ENCODE measurements at regions of chr12 and their contacts with region 1.

Region 1: DNA sequence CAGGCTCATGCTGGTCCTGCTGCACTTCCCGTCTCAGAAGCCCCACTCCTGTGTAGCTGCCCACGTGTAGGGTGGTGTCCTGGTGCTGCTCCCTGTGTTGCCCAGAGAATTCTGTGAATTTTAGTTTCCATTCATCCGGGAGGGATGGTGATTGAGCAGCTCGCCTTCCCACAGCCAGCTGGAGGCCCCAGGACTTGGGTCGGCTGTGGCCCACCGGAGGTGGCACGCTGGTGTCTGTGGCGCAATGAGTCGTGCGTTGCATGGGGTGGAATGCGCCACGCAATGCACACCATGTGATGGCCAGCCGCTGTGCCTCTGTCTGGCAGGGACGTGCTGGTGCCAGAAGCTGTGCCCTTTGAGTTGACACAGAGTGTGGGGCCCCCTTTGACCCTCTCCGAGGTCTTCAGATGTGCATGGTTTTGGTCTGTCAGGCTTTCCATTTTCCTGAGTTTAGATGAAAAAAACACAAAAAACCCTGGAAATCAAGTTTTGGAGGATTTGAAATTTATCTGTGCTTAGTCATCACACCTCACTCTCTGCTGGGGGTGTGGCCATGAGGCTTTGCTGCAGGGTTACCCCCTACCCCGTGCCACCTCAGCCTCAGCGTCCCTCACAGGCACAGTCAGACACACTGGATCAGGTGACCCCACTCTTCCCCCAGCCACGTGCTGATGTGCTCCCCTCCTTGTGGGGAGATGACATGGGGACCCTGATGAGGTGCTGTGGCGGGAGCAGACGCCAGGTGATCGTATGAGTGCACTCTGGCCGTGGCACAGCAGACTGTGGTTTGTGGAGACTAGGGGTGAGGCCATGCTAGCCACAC is 64.6 kb downstream of the EP400 start:
- DNase-seq: peak; percentile 45

Region 2: DNA sequence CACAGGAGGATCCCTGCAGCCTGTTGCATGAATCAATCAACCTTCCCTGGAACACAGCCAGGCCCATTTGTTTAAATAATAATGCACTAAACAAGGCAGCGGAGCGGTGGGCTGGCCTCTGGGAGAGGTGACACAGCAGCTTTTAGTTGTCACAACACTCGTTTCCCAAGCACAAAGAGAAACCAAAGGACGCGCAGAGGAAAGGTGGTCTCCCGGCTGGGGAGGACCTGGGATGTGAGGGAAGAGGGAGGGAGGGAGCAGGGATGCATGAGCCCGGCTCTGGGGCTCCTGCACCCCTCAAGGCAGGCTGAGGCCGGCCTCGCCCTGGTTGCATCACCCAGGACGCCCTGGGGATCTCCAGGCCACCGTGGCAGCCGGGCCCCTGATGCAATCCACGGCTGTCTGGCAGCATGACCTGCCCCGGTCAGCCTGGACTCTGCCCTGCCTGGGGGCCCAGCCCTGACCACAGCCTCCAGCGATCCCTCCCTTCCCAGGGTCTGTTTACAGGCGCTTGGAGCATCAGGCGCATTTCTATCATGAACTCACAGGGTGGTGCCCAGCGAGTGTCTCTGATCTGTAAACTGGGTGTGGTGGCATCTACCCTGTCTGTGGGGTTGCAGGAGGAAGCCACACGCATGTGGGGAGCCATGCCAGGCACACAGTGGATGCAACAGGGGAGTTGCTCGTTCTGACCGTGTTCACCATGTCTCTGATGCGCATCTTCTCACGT is 153.6 kb before region 1 on chr12:
- intact Hi-C with region 1: no loop called
- DNase-seq: peak; percentile 88

Region 3: DNA sequence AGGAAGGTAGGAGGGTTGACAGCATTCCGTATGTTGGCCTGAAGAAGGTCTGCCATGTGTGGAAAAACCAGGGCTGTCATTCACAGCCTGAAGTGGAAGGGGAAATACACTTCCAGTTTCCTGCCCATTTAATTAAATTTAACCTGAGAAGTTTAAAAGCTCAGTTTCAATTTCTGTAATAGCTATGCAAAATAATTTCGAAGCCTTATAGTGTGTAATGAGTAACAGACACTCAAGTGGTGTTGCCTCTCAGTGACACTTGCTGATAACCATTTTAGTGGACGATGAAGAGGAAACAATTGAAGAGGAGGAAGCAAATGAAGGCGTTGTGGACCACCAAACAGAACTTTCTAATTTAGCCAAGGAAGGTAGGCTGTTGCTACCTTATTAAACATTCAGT is 19.7 kb before region 1 on chr12:
- intact Hi-C with region 1: loop called in 1 of 2 experiments (anchors 2 kb)
- DNase-seq: no peak

Region 4: DNA sequence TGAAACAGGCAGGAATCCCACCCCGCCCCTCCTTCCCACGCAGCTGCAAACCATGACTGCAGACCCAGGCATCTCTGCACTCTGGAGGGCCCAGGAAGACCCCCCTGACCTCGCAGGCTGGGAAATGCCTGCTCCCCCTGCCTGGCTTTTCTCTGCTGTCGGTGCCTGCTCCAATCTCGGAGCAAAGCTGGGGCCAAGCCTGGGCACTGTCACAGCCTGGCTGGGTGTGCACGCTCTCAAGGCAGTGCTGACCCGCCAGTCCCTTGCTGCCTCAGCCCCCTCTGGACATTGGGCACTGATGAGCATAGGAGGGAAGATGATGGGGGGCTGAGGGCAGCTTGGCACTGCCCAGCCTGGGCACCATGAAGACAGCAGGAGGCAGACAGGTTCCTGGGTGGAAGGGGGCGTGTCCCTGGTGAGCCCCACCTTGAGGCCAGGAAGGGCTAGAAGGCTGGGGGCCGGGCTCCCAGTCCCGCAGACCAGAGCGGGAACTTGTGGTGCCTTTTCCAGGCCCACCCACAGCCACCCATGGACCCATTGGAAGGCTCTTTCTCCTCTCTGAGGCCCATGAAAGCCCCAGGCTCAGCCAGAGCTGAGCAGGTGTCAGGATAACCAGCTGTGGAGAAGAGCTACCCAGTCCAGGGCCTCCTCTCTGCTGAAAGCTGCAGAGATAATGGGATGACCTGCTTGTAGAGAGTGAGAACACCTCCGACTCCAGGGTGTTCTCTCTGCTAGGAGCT is 952.5 kb after region 1 on chr12:
- intact Hi-C with region 1: no loop called
- DNase-seq: no peak